ENCODE measurements at regions of chr17 and their contacts with region 1.

Region 1: DNA sequence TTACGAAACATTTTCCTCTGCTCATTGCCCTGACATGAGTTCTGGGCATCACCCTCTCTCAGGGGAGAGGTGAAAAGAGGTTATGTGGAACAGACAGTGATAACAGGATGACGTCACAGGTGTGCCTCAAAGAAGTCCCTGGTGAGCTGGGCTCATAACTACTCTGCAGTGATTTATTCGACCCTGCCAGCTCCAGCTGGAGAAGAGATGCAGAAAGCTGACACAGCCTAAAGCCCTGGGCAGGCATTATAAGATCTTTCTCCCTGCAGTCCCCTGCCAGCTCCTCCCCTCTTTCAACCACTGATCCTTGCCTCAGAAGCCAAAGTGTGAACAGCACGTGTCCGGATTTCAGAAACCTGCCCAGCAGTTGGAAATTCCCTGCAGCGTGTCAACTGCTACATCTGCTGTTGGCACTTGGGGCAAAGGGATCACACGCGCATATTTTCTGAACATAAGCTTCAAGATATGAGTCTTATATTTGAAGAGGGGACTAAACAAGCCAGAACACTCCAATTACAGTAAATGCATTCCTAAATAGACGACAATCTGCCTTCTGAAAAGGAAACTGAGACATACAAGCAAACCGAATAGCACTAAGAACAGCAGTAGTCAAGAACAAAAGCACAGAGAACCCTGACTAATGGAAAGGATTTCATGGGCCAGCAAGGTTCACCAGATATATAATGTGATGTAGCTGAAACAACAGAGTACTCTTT is 80.5 kb downstream of the SMG6 start:
- DNase-seq: peak; percentile 81
- ATAC-seq: peak; percentile 95
- H3K4me3 ChIP-seq: peak overlapping the region; percentile 29; the same call in 1 of the 2 replicates
- H3K27ac ChIP-seq: peak overlapping the region; percentile 87
- H3K4me1 ChIP-seq: peaks cover 30% of the 10 kb centered on the region
- H3K27me3 ChIP-seq: no peaks in the 10 kb centered on the region
- CTCF ChIP-seq: no peak
- EP300 ChIP-seq: peak; percentile 69 to 88
- POLR2A ChIP-seq: peak; percentile 13; the same call in 1 of the 2 replicates
- RAD21 ChIP-seq: 0 out of 2 replicates have a peak, but pooled peaks have one; percentile 8

Region 2: DNA sequence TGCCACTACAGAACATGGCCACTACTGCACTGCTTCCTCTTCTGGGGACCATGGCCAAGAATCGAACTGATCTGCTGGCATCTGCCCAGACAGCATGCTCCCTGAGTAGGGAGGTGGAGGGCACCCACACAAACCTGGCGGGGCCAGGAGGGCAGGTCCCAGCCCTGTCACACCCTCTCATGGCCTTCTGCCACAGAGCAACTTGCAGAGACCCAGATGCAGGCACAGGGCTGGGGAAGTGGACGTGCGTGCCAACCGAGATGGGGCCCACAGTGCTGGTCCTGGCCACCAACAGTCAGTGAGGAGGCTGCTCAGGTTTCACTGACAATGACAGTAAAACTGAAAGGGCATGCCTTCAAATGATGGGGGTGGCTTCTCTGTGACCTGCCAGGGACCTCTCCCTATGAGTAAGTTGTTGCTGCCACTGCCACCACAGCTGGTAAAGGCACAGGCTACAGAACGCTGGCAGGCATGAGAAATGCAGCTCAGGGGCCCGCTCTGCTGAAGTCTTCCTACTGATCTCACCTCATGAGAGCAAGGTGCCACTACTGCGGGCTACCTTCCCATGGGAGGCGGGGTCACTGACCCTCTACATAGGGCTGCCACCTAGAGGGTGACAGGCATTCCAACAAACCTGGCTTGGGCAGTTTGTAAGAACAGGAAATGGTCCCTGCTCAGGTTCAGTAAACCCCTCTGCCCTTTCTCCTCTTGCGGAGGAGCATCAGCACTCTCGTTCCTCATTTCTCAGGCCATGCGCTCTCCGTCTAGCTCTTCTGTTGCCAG is 152.6 kb before region 1 on chr17:
- CTCF ChIA-PET with region 1: interaction called, 6 read pairs
- POLR2A ChIA-PET with region 1: no interaction called
- RAD21 ChIA-PET with region 1: interaction called, 10 read pairs
- SMC1A ChIA-PET with region 1: interaction called, 4 read pairs
- in situ Hi-C with region 1: no loop called
- intact Hi-C with region 1: no loop called
- DNase-seq: peak; percentile 96
- ATAC-seq: peak; percentile 93
- H3K4me3 ChIP-seq: peak overlapping the region; percentile 1; the same call in 1 of the 2 replicates
- H3K27ac ChIP-seq: peak overlapping the region; percentile 95
- H3K4me1 ChIP-seq: peaks cover 43% of the 10 kb centered on the region
- H3K27me3 ChIP-seq: no peaks in the 10 kb centered on the region
- CTCF ChIP-seq: peak in 2 of 3 experiments; percentile 7 to 22; a peak in 1 of 6 replicates
- EP300 ChIP-seq: peak; percentile 96 to 99
- POLR2A ChIP-seq: peak; percentile 79
- RAD21 ChIP-seq: 0 out of 2 replicates have a peak, but pooled peaks have one; percentile 0

Region 3: GRCh38 chr17:2122641-2123302 is 100.3 kb before region 1 on chr17:
- CTCF ChIA-PET with region 1: no interaction called
- POLR2A ChIA-PET with region 1: no interaction called
- RAD21 ChIA-PET with region 1: interaction called, 5 read pairs
- SMC1A ChIA-PET with region 1: interaction called, 15 read pairs
- in situ Hi-C with region 1: no loop called
- intact Hi-C with region 1: no loop called
- DNase-seq: no peak
- ATAC-seq: peak; percentile 79
- H3K4me3 ChIP-seq: no peak overlapping the region
- H3K27ac ChIP-seq: peak overlapping the region; percentile 65
- H3K4me1 ChIP-seq: peaks cover 23% of the 10 kb centered on the region
- H3K27me3 ChIP-seq: no peaks in the 10 kb centered on the region
- CTCF ChIP-seq: 0 out of 6 replicates have a peak, but pooled peaks of 2 of the 3 experiments have one; percentile 1 to 7
- EP300 ChIP-seq: no peak
- POLR2A ChIP-seq: no peak
- RAD21 ChIP-seq: peak; percentile 19; the same call in 1 of the 2 replicates

Region 4: GRCh38 chr17:2192367-2193057 is 30.5 kb before region 1 on chr17:
- CTCF ChIA-PET with region 1: interaction called, 4 read pairs
- POLR2A ChIA-PET with region 1: interaction called, 7 read pairs
- RAD21 ChIA-PET with region 1: interaction called, 9 read pairs
- SMC1A ChIA-PET with region 1: interaction called, 18 read pairs
- in situ Hi-C with region 1: no loop called
- intact Hi-C with region 1: no loop called
- DNase-seq: peak; percentile 72
- ATAC-seq: peak; percentile 93
- H3K4me3 ChIP-seq: no peak overlapping the region
- H3K27ac ChIP-seq: peak overlapping the region; percentile 52
- H3K4me1 ChIP-seq: peaks cover 35% of the 10 kb centered on the region
- H3K27me3 ChIP-seq: no peaks in the 10 kb centered on the region
- CTCF ChIP-seq: no peak
- EP300 ChIP-seq: no peak
- POLR2A ChIP-seq: no peak
- RAD21 ChIP-seq: no peak

Region 5: GRCh38 chr17:2238432-2239169 is 15.5 kb after region 1 on chr17:
- CTCF ChIA-PET with region 1: interaction called, 37 read pairs
- POLR2A ChIA-PET with region 1: interaction called, 22 read pairs
- RAD21 ChIA-PET with region 1: interaction called, 50 read pairs
- SMC1A ChIA-PET with region 1: interaction called, 70 read pairs
- in situ Hi-C with region 1: no loop called
- intact Hi-C with region 1: no loop called
- DNase-seq: peak; percentile 86
- ATAC-seq: peak; percentile 88
- H3K4me3 ChIP-seq: peak overlapping the region; percentile 45; the same call in 1 of the 2 replicates
- H3K27ac ChIP-seq: peak overlapping the region; percentile 99
- H3K4me1 ChIP-seq: peaks cover 50% of the 10 kb centered on the region
- H3K27me3 ChIP-seq: no peaks in the 10 kb centered on the region
- CTCF ChIP-seq: no peak
- EP300 ChIP-seq: 0 out of 4 replicates have a peak, but pooled peaks of 1 of the 2 experiments have one; percentile 34
- POLR2A ChIP-seq: peak; percentile 62
- RAD21 ChIP-seq: no peak

Region 6: DNA sequence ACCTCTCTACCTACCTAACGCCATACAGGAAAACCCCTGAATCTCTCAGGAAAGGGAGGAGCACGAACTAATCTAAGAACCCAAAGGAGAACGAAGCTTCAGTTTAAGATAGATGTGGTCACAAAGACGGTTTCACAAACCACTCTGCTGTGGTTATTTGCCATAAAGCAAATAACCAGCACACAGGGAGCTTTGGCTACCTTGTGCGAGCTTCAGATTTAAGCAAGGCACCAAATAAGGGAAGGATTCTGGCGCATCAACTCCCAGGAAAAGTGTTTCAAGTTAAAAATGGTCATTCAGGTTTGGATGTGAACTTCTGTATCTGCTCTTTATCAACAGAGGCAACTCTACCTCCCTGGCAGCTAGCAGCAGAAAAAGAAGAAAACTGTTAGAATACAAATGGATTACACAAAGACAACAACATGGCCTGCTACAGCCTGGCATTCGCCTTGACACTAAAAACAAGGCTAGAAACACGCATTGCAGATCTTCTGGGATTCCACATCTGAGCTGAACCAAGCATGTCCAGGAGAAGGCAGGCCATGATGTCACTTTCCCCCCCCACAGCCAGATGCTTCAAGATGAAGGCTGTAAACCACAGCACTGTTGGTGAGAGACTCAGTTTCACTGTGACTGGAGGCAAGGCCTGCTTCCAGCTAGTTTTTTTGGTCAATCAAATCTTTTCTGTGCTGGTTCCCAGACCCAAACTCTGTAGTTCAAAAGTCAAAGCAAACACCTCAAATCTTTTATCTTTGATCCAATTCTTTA is 36.9 kb after region 1 on chr17:
- CTCF ChIA-PET with region 1: interaction called, 15 read pairs
- POLR2A ChIA-PET with region 1: interaction called, 17 read pairs
- RAD21 ChIA-PET with region 1: interaction called, 22 read pairs
- SMC1A ChIA-PET with region 1: interaction called, 32 read pairs
- in situ Hi-C with region 1: no loop called
- intact Hi-C with region 1: no loop called
- DNase-seq: peak; percentile 85
- ATAC-seq: peak; percentile 91
- H3K4me3 ChIP-seq: peak overlapping the region; percentile 44; the same call in 1 of the 2 replicates
- H3K27ac ChIP-seq: peak overlapping the region; percentile 99
- H3K4me1 ChIP-seq: peaks cover 64% of the 10 kb centered on the region
- H3K27me3 ChIP-seq: no peaks in the 10 kb centered on the region
- CTCF ChIP-seq: no peak
- EP300 ChIP-seq: peak; percentile 67 to 80
- POLR2A ChIP-seq: peak; percentile 61
- RAD21 ChIP-seq: no peak

Measured in GM12878 (cell line).